ENCODE measurements at regions of chr1 and their contacts with region 1.

Region 1: GRCh38 chr1:26500488-26501175 is 28.4 kb downstream of the HMGN2 start:
- DNase-seq: peak; percentile 95
- ATAC-seq: peak; percentile 77
- H3K4me3 Mint-ChIP-seq: peak overlapping the region; percentile 88
- H3K27ac Mint-ChIP-seq: peak overlapping the region; percentile 94
- H3K4me1 Mint-ChIP-seq: peaks cover 16% of the 10 kb centered on the region
- H3K27me3 Mint-ChIP-seq: no peaks in the 10 kb centered on the region

Region 2: DNA sequence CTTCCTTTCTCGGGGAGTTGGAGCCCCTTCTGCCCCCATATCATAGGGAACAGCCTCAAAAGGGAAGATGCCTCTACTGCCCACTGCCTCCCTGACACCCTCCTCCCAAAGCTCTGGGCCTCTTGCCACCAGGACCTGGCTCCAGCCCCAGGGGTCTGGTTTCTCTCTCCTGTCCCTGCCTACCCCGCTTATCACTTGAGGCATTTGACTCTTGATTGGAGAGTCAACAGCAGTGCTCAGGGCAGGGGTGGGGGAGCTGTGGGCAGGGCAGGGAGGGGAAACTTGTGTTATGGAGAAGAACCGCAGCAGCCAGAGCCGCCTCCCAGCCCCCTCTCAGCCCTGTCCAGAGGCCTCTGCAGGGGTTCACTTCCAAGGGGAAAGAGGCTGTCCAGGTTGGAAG is 433.8 kb before region 1 on chr1:
- CTCF ChIA-PET with region 1: no interaction called
- POLR2A ChIA-PET with region 1: no interaction called
- intact Hi-C with region 1: no loop called
- DNase-seq: no peak
- ATAC-seq: no peak
- H3K4me3 Mint-ChIP-seq: no peak overlapping the region
- H3K27ac Mint-ChIP-seq: no peak overlapping the region
- H3K4me1 Mint-ChIP-seq: no peaks in the 10 kb centered on the region
- H3K27me3 Mint-ChIP-seq: no peaks in the 10 kb centered on the region

Region 3: GRCh38 chr1:26306290-26307229 is 194.1 kb before region 1 on chr1 and contains the start of gene UBXN11:
- CTCF ChIA-PET with region 1: no interaction called
- POLR2A ChIA-PET with region 1: no interaction called
- intact Hi-C with region 1: loop called in 1 of 2 experiments (anchors 1 kb)
- DNase-seq: peak; percentile 96
- ATAC-seq: peak; percentile 94
- H3K4me3 Mint-ChIP-seq: peak within 1 kb of the TSS; percentile 90
- H3K27ac Mint-ChIP-seq: peak within 1 kb of the TSS; percentile 95
- H3K4me1 Mint-ChIP-seq: peaks cover 32% of the 10 kb centered on the region
- H3K27me3 Mint-ChIP-seq: no peaks in the 10 kb centered on the region
- total RNA-seq, gene UBXN11: 19.4 to 22.2 TPM

Region 4: DNA sequence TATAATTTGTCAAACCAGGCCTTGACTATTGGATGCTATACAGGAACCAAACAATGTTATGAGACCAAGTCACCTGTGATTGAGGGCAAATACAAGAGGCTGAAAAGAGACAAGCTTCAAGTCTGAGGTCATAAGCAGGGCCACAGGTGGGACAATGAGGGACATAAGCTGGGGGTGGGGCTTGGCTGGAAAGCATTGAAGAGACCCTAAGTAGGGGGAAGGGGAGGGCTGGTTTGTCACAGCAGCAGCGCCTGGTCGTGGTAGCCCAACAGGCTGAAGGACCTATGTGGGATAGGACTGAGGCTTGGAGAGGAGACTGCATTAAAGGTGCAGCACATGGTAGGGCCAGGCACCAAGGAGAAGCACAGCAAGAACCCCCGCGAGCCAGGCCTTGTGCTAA is 10.5 kb before region 1 on chr1:
- CTCF ChIA-PET with region 1: interaction called, 12 read pairs
- POLR2A ChIA-PET with region 1: interaction called, 3 read pairs
- intact Hi-C with region 1: no loop called
- DNase-seq: no peak
- ATAC-seq: no peak
- H3K4me3 Mint-ChIP-seq: no peak overlapping the region
- H3K27ac Mint-ChIP-seq: no peak overlapping the region
- H3K4me1 Mint-ChIP-seq: no peaks in the 10 kb centered on the region
- H3K27me3 Mint-ChIP-seq: no peaks in the 10 kb centered on the region

Region 5: GRCh38 chr1:26582836-26583460 is 82.3 kb after region 1 on chr1:
- CTCF ChIA-PET with region 1: interaction called, 9 read pairs
- POLR2A ChIA-PET with region 1: interaction called, 4 read pairs
- intact Hi-C with region 1: loop called (anchors 1 to 2 kb)
- DNase-seq: peak; percentile 93
- ATAC-seq: peak; percentile 55
- H3K4me3 Mint-ChIP-seq: peak overlapping the region; percentile 35
- H3K27ac Mint-ChIP-seq: peak overlapping the region; percentile 95
- H3K4me1 Mint-ChIP-seq: peaks cover 54% of the 10 kb centered on the region
- H3K27me3 Mint-ChIP-seq: no peaks in the 10 kb centered on the region

Region 6: DNA sequence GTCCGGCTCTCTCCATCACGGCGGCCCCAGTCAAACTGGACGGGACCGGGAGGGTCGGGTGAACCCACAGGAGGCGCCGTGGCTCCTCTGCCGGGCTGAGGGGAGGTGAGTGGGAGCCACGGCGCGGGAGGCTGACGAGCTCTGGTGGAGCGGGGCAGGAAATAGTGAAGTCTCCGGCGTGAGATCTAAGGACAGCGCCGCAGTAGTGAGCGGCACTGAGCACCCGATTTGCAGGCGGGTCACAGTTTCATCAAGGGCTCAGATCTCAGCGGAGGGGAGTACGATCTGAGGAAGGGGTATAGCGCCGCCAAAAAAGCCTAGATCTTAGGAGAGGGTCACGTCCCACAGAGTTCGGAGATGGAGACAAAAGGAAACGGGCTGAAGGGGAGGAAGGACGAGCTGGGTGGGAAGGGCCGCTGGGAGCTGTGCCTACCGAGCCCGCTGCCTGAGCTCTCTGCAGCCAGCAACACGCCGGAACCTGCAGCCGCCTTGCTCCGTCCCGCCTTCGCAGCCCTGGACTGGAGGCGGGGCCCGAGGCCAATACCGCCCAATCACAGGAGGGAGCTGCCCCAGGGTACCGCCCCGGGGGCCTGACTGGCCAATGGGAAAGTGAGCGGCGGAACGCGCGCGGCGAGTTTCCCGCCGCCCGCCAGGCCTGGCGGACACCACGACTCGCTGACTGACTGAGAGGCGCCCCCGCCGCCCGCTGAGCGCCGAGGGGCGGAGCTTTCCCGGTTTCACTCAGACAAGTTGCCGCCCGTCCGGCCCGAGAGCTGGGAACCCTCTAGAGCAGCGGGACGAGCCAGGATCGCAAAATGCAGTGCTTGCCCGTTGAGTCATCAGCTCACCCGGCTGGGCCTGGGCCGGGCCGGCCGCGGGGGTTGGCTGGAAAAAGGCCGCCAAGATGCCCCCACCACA is 364.2 kb after region 1 on chr1:
- CTCF ChIA-PET with region 1: interaction called, 7 read pairs
- POLR2A ChIA-PET with region 1: interaction called, 11 read pairs
- intact Hi-C with region 1: loop called (anchors 1 to 10 kb)
- DNase-seq: peak; percentile 97
- ATAC-seq: peak; percentile 94
- H3K4me3 Mint-ChIP-seq: peak overlapping the region; percentile 89
- H3K27ac Mint-ChIP-seq: peak overlapping the region; percentile 96
- H3K4me1 Mint-ChIP-seq: peaks cover 22% of the 10 kb centered on the region
- H3K27me3 Mint-ChIP-seq: no peaks in the 10 kb centered on the region

Region 7: DNA sequence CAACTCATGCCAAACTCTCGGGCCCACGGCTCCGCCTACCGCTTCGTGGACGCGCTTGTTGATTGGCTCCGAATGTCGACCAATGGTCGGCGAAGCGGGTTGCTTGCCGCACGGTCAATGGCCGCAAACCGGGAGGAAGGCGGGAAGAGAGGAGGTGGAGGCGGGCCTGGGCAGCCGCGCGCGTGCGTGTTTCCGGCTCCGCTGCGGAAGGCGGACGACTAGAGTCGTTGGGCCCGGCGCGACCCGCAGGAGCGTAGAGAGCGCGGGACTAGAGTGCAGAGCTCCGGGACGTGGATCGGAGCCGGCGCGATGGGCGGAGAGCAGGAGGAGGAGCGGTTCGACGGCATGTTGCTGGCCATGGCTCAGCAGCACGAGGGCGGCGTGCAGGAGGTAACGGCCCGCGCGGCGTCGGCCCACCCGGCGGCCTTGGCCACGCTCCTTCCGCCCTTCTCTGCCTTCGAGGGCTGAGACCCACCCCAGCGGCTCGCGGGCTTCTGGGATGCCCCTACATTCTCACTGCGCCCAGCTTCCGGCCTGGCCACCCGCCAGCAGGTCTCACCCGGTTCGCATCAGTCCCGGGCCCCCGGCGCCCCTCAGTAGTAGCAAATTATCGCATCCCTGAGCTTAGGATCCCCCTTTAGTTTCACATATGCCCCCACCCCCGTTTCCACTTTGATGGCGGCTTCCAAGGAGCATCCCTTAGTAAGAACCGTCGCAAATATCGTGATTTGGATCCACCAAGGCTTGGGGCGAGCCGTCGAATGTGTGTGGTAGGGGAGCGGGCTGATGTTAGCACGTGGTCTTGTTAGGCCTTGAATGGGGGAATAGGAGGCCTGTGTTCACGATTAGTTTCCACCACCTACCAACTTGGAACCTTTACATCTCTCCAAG is 421.2 kb after region 1 on chr1 and contains the start of gene NUDC:
- CTCF ChIA-PET with region 1: no interaction called
- POLR2A ChIA-PET with region 1: no interaction called
- intact Hi-C with region 1: loop called in 1 of 2 experiments (anchors 1 kb)
- DNase-seq: peak; percentile 98
- ATAC-seq: peak; percentile 98
- H3K4me3 Mint-ChIP-seq: peak within 1 kb of the TSS; percentile 82
- H3K27ac Mint-ChIP-seq: peak within 1 kb of the TSS; percentile 90
- H3K4me1 Mint-ChIP-seq: peaks cover 38% of the 10 kb centered on the region
- H3K27me3 Mint-ChIP-seq: no peaks in the 10 kb centered on the region
- total RNA-seq, gene NUDC: 95.9 to 101 TPM